PC-3 (cell line): ENCODE measurements at regions of chr6 and their contacts with region 1.

Region 1: GRCh38 chr6:30752157-30752927 is 8.0 kb upstream of the IER3 start:
- DNase-seq: peak; percentile 100
- ATAC-seq: peak; percentile 69
- H3K4me3 ChIP-seq: no peak overlapping the region
- H3K27ac ChIP-seq: peak overlapping the region; percentile 98
- H3K4me1 ChIP-seq: peaks cover 76% of the 10 kb centered on the region
- H3K27me3 ChIP-seq: no peaks in the 10 kb centered on the region
- CTCF ChIP-seq: 0 out of 2 replicates have a peak, but pooled peaks have one; percentile 14

Region 2: DNA sequence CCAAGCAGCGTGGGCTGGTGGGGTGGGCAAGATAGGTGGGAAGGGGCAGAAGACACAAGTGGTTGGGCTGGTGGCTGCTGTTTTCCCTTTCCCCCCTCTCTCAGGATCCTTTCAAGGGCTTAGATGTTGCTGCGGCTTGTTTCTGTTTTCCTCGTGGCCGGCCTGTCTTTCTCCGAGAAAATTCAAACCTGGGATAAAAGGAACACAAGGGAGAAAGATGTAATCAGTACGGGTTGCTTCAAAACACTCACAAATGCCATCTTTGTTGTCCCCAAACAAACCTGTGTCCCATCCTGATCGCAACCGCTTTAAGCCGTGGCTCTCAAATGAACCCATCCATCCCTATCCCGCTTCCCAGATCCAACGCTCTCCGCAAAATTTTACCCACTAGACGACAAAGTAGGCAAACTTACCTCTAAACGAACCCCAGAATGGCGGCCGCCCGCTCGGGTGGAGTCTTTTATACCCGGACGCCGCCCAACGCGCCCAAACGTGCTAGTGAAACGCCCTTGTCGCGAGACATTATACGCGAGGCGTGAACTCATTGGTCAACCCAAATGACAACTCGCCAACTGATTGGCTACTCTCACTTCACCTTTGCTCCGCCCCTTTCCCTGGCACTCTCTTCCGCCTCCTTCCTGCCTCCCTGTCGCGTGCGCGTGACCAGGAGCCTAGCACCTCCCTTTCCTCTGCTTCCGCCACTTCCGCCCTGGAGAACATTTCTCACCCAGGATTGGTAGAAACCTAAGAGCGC is 135.4 kb before region 1 on chr6 and contains the start of gene PPP1R10:
- CTCF ChIA-PET with region 1: no interaction called
- POLR2A ChIA-PET with region 1: interaction called, 32 read pairs
- intact Hi-C with region 1: no loop called
- DNase-seq: peak; percentile 100
- ATAC-seq: peak; percentile 73
- H3K4me3 ChIP-seq: peak within 1 kb of the TSS; percentile 86
- H3K27ac ChIP-seq: peak within 1 kb of the TSS; percentile 92
- H3K4me1 ChIP-seq: peaks cover 40% of the 10 kb centered on the region
- H3K27me3 ChIP-seq: no peaks in the 10 kb centered on the region
- CTCF ChIP-seq: no peak
- total RNA-seq, gene PPP1R10: 44.2 and 44.5 TPM in 2 replicates

Region 3: GRCh38 chr6:30769088-30769852 is 16.9 kb after region 1 on chr6:
- CTCF ChIA-PET with region 1: no interaction called
- POLR2A ChIA-PET with region 1: interaction called, 32 read pairs
- intact Hi-C with region 1: loop called (anchors 1 kb)
- DNase-seq: peak; percentile 96
- ATAC-seq: peak; percentile 90
- H3K4me3 ChIP-seq: peak overlapping the region; percentile 39
- H3K27ac ChIP-seq: peak overlapping the region; percentile 98
- H3K4me1 ChIP-seq: peaks cover 36% of the 10 kb centered on the region
- H3K27me3 ChIP-seq: no peaks in the 10 kb centered on the region
- CTCF ChIP-seq: no peak

Region 4: GRCh38 chr6:30781743-30782424 is 29.5 kb after region 1 on chr6:
- CTCF ChIA-PET with region 1: interaction called, 8 read pairs
- POLR2A ChIA-PET with region 1: interaction called, 40 read pairs
- intact Hi-C with region 1: loop called (anchors 1 kb)
- DNase-seq: peak; percentile 99
- ATAC-seq: peak; percentile 64
- H3K4me3 ChIP-seq: peak overlapping the region; percentile 43
- H3K27ac ChIP-seq: peak overlapping the region; percentile 96
- H3K4me1 ChIP-seq: peaks cover 52% of the 10 kb centered on the region
- H3K27me3 ChIP-seq: no peaks in the 10 kb centered on the region
- CTCF ChIP-seq: no peak

Region 5: GRCh38 chr6:30821862-30822782 is 69.8 kb after region 1 on chr6:
- CTCF ChIA-PET with region 1: interaction called, 10 read pairs
- POLR2A ChIA-PET with region 1: interaction called, 12 read pairs
- intact Hi-C with region 1: loop called (anchors 1 kb)
- DNase-seq: peak; percentile 70
- ATAC-seq: 0 out of 2 replicates have a peak, but pooled peaks have one; percentile 8
- H3K4me3 ChIP-seq: peak overlapping the region; percentile 13; the same call in 1 of the 2 replicates
- H3K27ac ChIP-seq: peak overlapping the region; percentile 74
- H3K4me1 ChIP-seq: peaks cover 63% of the 10 kb centered on the region
- H3K27me3 ChIP-seq: no peaks in the 10 kb centered on the region
- CTCF ChIP-seq: peak; percentile 77

Region 6: GRCh38 chr6:30883685-30884520 is 131.6 kb after region 1 on chr6 and contains the start of gene DDR1:
- CTCF ChIA-PET with region 1: no interaction called
- POLR2A ChIA-PET with region 1: interaction called, 16 read pairs
- intact Hi-C with region 1: no loop called
- DNase-seq: peak; percentile 75
- ATAC-seq: peak; percentile 31
- H3K4me3 ChIP-seq: peak within 1 kb of the TSS; percentile 70
- H3K27ac ChIP-seq: peak within 1 kb of the TSS; percentile 93
- H3K4me1 ChIP-seq: peaks cover 58% of the 10 kb centered on the region
- H3K27me3 ChIP-seq: no peaks in the 10 kb centered on the region
- CTCF ChIP-seq: no peak
- total RNA-seq, gene DDR1: 108 and 144 TPM in 2 replicates

Region 7: GRCh38 chr6:31079656-31080261 is 327.4 kb after region 1 on chr6:
- CTCF ChIA-PET with region 1: no interaction called
- POLR2A ChIA-PET with region 1: no interaction called
- intact Hi-C with region 1: loop called (anchors 5 kb)
- DNase-seq: peak; percentile 87
- ATAC-seq: peak; percentile 82
- H3K4me3 ChIP-seq: no peak overlapping the region
- H3K27ac ChIP-seq: no peak overlapping the region
- H3K4me1 ChIP-seq: no peaks in the 10 kb centered on the region
- H3K27me3 ChIP-seq: no peaks in the 10 kb centered on the region
- CTCF ChIP-seq: peak; percentile 91